OCI-LY7 (cell line): ENCODE measurements at regions of chr7 and their contacts with region 1.

Region 1: DNA sequence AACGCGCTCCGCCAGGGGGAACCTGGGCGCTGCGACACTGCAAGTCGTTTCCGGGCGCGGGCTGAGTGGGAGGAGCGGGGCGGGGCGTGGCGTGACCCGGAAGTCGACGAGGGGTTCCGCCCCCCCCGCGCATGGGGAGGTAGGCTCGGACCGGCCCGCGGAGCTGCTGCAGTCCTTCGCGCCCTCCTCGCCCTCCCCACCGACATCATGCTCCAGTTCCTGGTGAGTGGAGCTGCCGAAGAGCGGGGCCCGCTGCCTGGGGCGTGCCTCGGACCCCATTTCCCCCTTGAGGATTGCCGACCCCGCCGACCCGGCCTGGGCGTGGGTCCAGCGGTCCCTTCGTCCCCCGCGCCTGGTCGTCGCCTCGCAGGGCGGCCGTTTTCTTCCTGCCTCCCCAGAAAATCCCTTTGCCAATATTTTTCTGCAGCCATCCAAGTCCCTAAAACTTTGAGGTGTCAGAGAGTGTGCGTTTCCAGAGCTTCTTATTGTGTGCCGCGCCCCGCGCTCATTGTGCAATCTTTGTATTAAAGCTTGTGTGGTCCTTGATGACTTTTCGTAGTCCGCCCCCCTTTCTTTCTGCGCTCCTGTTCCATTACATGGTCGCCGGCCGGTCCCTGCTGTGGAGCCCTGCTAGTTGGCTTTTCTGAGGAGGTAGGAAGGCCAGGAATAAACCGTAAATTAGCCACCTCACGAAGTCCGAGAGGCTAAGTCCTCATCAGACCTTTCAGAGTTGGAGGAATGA is at the start of gene STMP1:
- DNase-seq: peak; percentile 94
- H3K4me3 ChIP-seq: peak within 1 kb of the TSS; percentile 95
- H3K27ac ChIP-seq: peak within 1 kb of the TSS; percentile 37
- H3K4me1 ChIP-seq: peaks cover 19% of the 10 kb centered on the region
- CTCF ChIP-seq: 0 out of 2 replicates have a peak, but pooled peaks have one; percentile 3
- total RNA-seq, gene STMP1: 7.4 and 8.0 TPM in 2 replicates

Region 2: DNA sequence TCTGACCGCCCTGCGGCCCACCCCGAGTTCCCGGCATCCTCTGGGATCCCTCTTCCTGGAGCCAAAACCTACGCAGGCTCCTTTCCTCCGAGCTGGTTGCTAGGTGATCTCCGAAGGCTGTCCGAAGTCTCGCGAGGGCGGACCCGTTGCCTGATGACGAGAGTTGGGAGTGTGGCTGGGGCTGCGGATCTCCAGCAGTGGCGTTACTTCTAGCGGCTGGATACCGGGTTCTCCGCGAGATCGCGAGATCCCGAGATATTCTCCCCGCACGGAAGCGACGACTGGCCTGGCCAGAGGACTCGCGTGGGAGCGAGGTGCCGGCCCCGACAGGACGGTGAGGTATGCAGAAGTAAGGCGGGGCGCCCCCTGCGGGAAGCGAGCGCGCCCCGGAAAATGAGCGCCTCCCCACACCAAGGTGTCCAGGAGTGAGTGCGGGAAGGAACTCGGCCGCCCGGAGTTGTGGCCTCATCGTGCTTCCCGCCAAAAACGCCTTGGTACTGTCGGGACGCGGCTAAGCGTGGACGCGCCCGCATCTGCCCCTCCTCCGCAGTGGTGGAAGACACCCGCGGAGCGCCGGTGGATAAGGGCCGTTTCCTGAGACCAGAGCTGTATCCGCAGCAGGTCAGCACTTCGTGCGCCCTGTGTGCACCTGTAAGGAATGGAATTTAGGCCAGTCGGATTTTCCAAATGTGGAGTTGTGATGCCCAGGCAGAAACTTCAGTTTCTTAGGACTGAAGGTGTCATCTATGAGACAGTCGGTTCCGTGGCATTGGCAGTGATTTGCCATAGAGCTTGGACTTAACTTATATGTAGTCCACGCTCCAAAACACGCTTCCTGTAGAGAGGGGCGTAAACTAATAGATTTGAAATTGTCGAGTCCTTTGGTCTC is 675.9 kb before region 1 on chr7 and contains the start of gene AGBL3:
- CTCF ChIA-PET with region 1: no interaction called
- POLR2A ChIA-PET with region 1: no interaction called
- intact Hi-C with region 1: loop called (anchors 10 kb)
- DNase-seq: peak; percentile 94
- H3K4me3 ChIP-seq: peak within 1 kb of the TSS; percentile 95
- H3K27ac ChIP-seq: peak within 1 kb of the TSS; percentile 49
- H3K4me1 ChIP-seq: peaks cover 4% of the 10 kb centered on the region
- CTCF ChIP-seq: peak; percentile 81
- total RNA-seq, gene AGBL3: 3.5 and 5.3 TPM in 2 replicates

Region 3: DNA sequence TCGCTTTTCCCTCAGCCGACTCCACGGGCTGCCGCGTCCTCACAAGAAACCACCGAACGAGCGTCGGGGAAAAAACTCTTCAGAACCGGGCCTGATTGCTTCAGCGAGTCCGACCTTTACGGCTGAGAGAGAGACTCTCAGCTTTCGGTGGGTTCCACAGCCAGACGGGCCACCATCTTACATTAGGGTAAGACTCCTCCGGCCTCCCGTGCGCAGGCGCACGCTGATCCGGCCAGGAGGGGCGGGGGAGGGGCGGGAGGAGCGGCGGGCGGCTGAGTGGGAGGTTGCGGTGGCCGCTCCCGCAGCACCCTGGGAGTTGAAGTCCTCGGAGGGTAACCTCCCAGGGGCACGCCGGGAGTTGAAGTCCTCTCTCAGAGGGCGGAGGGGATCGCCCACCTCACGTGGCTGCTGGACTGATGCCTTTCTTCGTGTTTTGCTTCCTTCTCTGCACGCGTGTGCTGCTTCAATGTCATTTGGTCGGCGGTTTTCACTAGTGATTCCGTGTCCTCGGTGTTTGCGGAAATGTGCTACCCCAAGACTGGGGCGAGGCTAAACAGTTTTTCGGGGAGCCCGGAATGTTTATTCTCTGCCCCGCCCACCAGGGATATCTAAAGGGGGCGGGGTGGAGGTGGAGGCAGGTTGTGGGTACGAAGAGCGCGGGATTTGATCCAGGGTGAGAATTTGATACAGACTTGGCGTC is 152.5 kb before region 1 on chr7 and contains the start of gene CNOT4:
- CTCF ChIA-PET with region 1: no interaction called
- POLR2A ChIA-PET with region 1: no interaction called
- intact Hi-C with region 1: loop called (anchors 5 kb)
- DNase-seq: peak; percentile 97
- H3K4me3 ChIP-seq: peak within 1 kb of the TSS; percentile 97
- H3K27ac ChIP-seq: peak within 1 kb of the TSS; percentile 71
- H3K4me1 ChIP-seq: peaks cover 28% of the 10 kb centered on the region
- CTCF ChIP-seq: no peak
- total RNA-seq, gene CNOT4: 18.7 and 21.8 TPM in 2 replicates

Region 4: DNA sequence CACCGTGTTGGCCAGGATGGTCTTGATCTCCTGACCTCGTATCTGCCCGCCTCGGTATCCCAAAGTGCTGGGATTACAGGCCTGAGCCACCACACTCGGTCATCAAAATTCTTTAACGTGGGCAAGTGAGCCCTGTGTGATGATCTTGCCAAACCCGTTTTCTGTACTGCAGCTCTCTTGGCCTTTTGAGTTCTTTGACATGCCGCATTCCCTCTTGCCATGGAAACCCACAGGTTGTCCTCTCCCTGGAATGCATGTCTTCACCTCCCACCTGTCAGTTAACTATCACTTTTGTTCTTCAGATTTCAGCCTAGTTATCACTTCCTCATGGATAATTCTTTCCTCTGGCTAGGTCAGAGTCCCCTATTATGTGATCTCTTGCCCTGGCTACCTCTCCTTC is 99.8 kb before region 1 on chr7:
- CTCF ChIA-PET with region 1: no interaction called
- POLR2A ChIA-PET with region 1: no interaction called
- intact Hi-C with region 1: no loop called
- DNase-seq: no peak
- H3K4me3 ChIP-seq: no peak overlapping the region
- H3K27ac ChIP-seq: no peak overlapping the region
- H3K4me1 ChIP-seq: peaks cover 15% of the 10 kb centered on the region
- CTCF ChIP-seq: no peak

Region 5: GRCh38 chr7:135925210-135925609 is 262.7 kb after region 1 on chr7:
- CTCF ChIA-PET with region 1: no interaction called
- POLR2A ChIA-PET with region 1: interaction called, 15 read pairs
- intact Hi-C with region 1: no loop called
- DNase-seq: no peak
- H3K4me3 ChIP-seq: no peak overlapping the region
- H3K27ac ChIP-seq: no peak overlapping the region
- H3K4me1 ChIP-seq: no peaks in the 10 kb centered on the region
- CTCF ChIP-seq: no peak

Region 6: DNA sequence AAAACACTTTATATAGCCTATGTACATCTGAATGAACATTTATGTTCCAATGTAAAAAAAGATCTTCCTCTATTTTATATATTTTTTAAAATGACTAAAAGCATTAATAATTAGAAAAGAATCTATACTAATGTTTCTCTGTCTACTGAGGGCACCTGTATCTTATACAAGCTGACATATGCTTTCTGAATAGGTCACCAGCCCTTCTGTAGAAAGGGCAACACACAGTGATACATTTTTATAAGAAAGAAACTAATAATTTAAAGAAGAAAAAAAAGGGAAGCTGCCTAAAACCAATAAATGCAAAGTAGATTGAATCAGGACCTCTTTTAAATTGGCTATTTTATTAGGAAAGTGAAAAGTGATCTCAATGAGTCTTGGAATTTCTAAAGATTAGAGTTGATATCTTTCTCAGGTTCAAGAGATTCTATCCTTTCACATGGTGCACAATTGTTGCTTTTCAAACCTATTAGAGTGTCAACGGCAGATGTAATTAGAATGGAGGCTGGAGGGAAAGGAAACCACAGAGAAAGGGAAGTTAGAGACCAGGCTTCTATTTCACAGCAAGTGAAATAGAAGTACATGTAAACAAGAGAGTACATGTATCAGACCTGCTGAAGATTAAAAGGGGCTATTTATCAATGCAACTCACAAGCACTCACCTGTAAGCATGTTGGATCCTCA is 308.3 kb after region 1 on chr7:
- CTCF ChIA-PET with region 1: no interaction called
- POLR2A ChIA-PET with region 1: no interaction called
- intact Hi-C with region 1: no loop called
- DNase-seq: peak; percentile 80
- H3K4me3 ChIP-seq: peak overlapping the region; percentile 97
- H3K27ac ChIP-seq: peak overlapping the region; percentile 93
- H3K4me1 ChIP-seq: peaks cover 79% of the 10 kb centered on the region
- CTCF ChIP-seq: no peak